HEK293 (cell line): ENCODE measurements at regions of chr1 and their contacts with region 1.

Region 1: GRCh38 chr1:182084487-182085316 is 23.2 kb upstream of the ZNF648 start:
- H3K4me3 ChIP-seq: no peak overlapping the region
- H3K27ac ChIP-seq: no peak overlapping the region
- H3K4me1 ChIP-seq: no peaks in the 10 kb centered on the region
- CTCF ChIP-seq: peak; percentile 68; the same call in 1 of the 2 replicates

Region 2: GRCh38 chr1:181479137-181479745 is 605.5 kb before region 1 on chr1:
- CTCF ChIA-PET with region 1: interaction called, 79 read pairs
- POLR2A ChIA-PET with region 1: no interaction called
- H3K4me3 ChIP-seq: no peak overlapping the region
- H3K27ac ChIP-seq: no peak overlapping the region
- H3K4me1 ChIP-seq: no peaks in the 10 kb centered on the region; the same call in 1 of the 2 replicates
- CTCF ChIP-seq: peak; percentile 64; the same call in 1 of the 2 replicates

Region 3: DNA sequence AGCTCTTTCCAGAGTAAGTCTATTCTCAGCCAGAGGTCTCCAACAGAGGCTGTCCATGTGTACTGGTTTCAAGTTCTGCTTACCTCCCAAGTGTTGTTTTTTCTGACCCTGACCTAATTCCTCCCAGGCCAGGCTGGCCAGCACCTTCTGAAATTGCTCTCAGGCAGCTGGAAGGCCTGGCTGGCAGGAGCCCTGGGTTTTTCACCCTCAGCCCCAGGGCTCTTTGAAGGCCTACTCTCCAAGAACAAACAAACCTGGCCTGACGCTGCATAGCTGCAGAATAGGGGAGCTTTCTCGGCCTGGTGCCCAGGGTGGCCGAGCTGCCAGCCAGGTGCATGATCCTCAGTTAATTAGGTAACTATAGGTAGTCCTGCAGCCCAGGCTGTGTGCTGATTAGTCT is 453.9 kb before region 1 on chr1:
- CTCF ChIA-PET with region 1: no interaction called
- POLR2A ChIA-PET with region 1: no interaction called
- H3K4me3 ChIP-seq: no peak overlapping the region
- H3K27ac ChIP-seq: no peak overlapping the region
- H3K4me1 ChIP-seq: no peaks in the 10 kb centered on the region
- CTCF ChIP-seq: no peak

Region 4: DNA sequence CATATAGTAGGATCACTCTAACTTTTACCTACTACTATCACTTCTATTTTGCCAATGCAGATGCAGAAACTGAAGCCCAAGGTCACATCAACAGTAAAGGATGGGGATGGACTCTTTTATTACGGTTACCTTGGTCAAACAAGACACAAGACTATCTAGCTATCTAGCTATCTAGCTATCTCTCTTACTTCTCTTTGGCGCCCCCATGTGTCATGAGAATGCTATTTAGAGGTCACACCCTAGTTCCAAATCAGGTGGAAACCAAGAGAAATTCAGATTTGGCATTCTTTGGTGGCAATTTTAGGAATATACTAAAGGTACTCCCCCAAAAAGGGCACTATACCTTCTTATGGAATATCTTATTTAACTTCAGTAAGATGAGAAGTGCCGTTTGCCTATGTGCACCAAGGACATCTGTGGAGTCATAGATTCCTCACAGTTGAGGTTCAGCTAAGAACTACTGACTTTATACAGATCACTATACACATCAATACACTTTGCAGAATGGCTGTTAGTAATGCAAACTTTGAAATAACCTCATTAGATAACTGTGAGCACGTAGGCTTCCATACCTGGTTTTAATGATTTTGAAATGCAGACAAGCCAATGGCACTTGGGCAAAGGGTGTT is 29.9 kb before region 1 on chr1:
- CTCF ChIA-PET with region 1: interaction called, 17 read pairs
- POLR2A ChIA-PET with region 1: no interaction called
- H3K4me3 ChIP-seq: no peak overlapping the region
- H3K27ac ChIP-seq: no peak overlapping the region
- H3K4me1 ChIP-seq: no peaks in the 10 kb centered on the region
- CTCF ChIP-seq: no peak

Region 5: DNA sequence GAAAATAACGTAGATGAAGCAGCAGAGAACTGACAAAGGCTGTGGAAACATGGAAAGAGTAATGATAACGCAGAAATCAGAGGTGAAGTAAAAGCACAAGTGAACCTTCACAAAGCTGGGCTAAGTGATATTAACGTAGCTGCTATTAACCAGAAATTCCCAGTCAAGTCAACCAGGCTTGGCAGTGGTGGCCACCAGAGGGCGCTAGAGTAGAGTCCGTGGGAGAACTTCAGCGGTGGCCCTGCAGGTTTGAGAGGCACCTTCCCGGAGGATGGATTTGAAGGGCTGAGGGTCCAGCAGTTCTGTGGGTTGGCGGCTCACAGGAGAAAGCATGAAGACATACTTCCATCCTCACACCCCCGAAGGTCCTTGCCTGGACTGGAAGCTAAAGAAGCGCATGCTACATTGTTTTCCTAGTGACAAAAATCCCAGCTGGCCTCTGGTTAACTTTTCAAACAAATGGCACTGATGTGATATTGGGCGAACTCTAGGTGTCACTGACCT is 58.5 kb after region 1 on chr1:
- CTCF ChIA-PET with region 1: interaction called, 26 read pairs
- POLR2A ChIA-PET with region 1: interaction called, 6 read pairs
- H3K4me3 ChIP-seq: no peak overlapping the region
- H3K27ac ChIP-seq: no peak overlapping the region
- H3K4me1 ChIP-seq: no peaks in the 10 kb centered on the region
- CTCF ChIP-seq: peak; percentile 84

Region 6: DNA sequence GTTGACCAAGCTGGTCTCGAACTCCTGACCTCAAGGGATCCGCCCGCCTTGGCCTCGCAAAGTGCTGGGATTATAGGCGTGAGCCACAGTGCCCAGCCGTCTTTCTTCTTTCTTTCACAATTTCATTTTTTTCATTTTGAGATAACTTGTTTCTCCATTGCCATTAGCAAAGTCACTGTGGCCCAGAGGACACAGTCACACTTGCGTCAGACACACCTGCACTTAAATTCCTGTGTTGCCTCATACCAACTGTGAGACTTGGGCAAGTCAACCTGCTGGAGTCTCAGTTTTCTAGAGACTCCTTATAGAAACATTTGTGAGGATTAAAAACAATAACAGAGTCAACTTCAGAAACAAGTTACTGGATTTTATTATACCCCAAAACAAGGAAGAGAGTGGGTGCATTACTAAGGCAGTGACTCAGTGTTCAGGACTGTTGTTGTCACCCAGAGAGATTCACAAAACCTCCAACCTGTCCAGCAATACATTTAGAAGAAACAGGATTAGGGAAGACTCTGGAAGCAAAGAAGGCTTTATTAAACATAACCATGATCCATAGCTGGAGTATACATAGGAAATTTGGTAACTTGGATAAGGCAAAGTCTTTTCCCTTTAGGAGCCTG is 313.2 kb after region 1 on chr1:
- CTCF ChIA-PET with region 1: interaction called, 80 read pairs
- POLR2A ChIA-PET with region 1: interaction called, 7 read pairs
- H3K4me3 ChIP-seq: no peak overlapping the region
- H3K27ac ChIP-seq: no peak overlapping the region
- H3K4me1 ChIP-seq: peaks cover 4% of the 10 kb centered on the region; the same call in 1 of the 2 replicates
- CTCF ChIP-seq: no peak

Region 7: GRCh38 chr1:182781841-182782586 is 697.3 kb after region 1 on chr1:
- CTCF ChIA-PET with region 1: interaction called, 14 read pairs
- POLR2A ChIA-PET with region 1: no interaction called
- H3K4me3 ChIP-seq: no peak overlapping the region
- H3K27ac ChIP-seq: no peak overlapping the region
- H3K4me1 ChIP-seq: no peaks in the 10 kb centered on the region
- CTCF ChIP-seq: peak; percentile 85